ENCODE measurements at regions of chr5 and their contacts with region 1.

Region 1: GRCh38 chr5:103224118-103224893 is 34.3 kb upstream of the MACIR start:
- DNase-seq: peak; percentile 43
- ATAC-seq: peak; percentile 93
- H3K4me3 ChIP-seq: no peak overlapping the region
- H3K27ac ChIP-seq: no peak overlapping the region
- H3K4me1 ChIP-seq: no peaks in the 10 kb centered on the region
- H3K27me3 ChIP-seq: no peaks in the 10 kb centered on the region
- CTCF ChIP-seq: peak; percentile 83

Region 2: GRCh38 chr5:102583276-102584124 is 640.8 kb before region 1 on chr5:
- CTCF ChIA-PET with region 1: no interaction called
- POLR2A ChIA-PET with region 1: no interaction called
- in situ Hi-C with region 1: no loop called
- intact Hi-C with region 1: loop called (anchors 5 kb)
- DNase-seq: no peak
- ATAC-seq: no peak
- H3K4me3 ChIP-seq: no peak overlapping the region
- H3K27ac ChIP-seq: no peak overlapping the region
- H3K4me1 ChIP-seq: no peaks in the 10 kb centered on the region
- H3K27me3 ChIP-seq: no peaks in the 10 kb centered on the region
- CTCF ChIP-seq: peak; percentile 45; the same call in 1 of the 2 replicates

Region 3: GRCh38 chr5:102999191-102999590 is 225.1 kb before region 1 on chr5:
- CTCF ChIA-PET with region 1: no interaction called
- POLR2A ChIA-PET with region 1: no interaction called
- in situ Hi-C with region 1: no loop called
- intact Hi-C with region 1: no loop called
- DNase-seq: no peak
- ATAC-seq: no peak
- H3K4me3 ChIP-seq: no peak overlapping the region
- H3K27ac ChIP-seq: no peak overlapping the region
- H3K4me1 ChIP-seq: no peaks in the 10 kb centered on the region
- H3K27me3 ChIP-seq: no peaks in the 10 kb centered on the region
- CTCF ChIP-seq: no peak